Transverse colon (tissue), 4 donors: ENCODE measurements at regions of chr15 and their contacts with region 1.

Region 1: DNA sequence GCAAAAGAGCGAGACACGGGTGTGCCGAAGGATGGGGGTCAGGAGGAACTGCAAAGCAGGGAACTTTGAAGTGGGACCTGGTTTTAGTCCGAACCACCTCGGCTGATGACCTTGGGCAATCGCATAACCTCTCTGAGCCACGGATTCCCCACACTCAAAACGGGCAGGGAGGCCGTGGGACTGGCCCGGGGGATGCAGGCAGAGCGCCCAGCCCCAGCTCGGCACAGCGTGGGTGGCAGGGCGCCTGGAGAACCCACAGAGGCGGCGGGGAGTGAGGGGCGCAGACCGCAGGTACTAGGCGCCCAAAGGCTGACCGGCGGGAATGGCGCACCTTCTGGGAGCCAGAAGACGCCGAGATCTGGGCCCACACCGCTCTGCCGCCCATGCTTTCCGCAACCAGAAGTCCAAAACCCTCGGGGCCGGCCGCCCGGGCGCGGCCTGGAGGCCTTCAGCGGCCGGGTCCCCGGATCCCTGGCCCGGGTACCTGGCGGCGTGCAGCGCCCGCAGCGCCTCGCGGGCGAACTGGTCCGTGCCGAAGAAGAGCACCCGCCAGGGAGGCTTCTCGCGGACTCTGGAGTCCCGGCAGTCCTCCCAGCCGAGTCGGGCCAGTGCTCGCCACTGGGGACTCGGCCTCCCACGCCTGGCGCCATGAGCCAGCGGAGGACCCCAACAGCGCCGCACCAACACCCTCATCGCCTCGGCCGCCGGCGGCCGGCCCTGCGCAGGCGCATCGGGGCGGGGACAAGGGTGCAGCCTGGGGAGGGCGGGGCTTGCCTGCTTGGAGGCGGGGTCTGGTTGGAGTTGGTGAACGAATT is at the start of gene MTFMT:
- DNase-seq: peak; percentile 95
- H3K4me3 ChIP-seq: peak within 1 kb of the TSS; percentile 62 to 98 (median 91)
- H3K27ac ChIP-seq: peak within 1 kb of the TSS; percentile 85 to 91 (median 89)
- H3K4me1 ChIP-seq: peaks cover 11 to 26% (median 17%) of the 10 kb centered on the region in 4 donors
- H3K27me3 ChIP-seq: no peaks in the 10 kb centered on the region
- CTCF ChIP-seq: no peak
- EP300 ChIP-seq: no peak
- POLR2A ChIP-seq: peak; percentile 92
- total RNA-seq, gene MTFMT: 9.8 to 40.5 (median 31.0) TPM

Region 2: DNA sequence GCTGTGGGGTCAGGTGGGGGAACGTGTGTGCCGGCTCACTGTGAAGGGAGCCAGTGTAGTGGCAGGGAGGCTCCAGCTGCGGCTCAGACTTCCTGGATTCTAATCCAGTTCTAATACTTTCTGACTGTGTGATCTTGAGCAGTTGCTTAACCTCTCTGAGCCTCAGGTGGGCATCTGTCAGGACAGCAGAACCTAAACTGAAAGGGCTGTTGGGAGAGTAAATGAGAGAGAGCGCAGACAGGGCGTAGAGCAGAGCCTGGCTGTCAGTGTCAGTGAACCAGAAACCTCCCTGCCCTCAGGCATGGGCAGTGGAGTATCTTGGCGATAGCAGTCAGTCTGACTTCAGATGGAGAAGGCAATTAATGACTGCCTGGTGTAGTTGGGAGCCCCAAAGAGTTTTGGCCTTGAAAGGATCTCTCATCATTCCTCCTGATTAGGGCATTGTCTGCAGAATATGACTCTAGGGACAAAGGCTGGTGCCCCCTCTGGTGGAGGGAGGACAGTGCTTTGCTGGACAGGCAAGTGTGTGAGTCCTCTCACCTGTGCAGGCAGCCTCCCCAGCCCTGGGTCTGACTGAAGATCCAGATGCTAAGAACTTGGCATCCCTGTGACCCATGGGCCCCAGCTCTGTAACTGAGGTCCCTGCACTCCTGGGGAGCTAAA is 57.0 kb after region 1 on chr15:
- in situ Hi-C with region 1: loop called in 3 of 4 experiments (anchors 10 kb)
- intact Hi-C with region 1: no loop called
- DNase-seq: peak; percentile 57
- H3K4me3 ChIP-seq: no peak overlapping the region
- H3K27ac ChIP-seq: peak overlapping the region; percentile 84 to 91 (median 88)
- H3K4me1 ChIP-seq: peaks cover 35 to 61% (median 50%) of the 10 kb centered on the region in 4 donors
- H3K27me3 ChIP-seq: no peaks in the 10 kb centered on the region
- CTCF ChIP-seq: peak; percentile 22 to 43 (median 33)
- EP300 ChIP-seq: no peak
- POLR2A ChIP-seq: no peak

Region 3: DNA sequence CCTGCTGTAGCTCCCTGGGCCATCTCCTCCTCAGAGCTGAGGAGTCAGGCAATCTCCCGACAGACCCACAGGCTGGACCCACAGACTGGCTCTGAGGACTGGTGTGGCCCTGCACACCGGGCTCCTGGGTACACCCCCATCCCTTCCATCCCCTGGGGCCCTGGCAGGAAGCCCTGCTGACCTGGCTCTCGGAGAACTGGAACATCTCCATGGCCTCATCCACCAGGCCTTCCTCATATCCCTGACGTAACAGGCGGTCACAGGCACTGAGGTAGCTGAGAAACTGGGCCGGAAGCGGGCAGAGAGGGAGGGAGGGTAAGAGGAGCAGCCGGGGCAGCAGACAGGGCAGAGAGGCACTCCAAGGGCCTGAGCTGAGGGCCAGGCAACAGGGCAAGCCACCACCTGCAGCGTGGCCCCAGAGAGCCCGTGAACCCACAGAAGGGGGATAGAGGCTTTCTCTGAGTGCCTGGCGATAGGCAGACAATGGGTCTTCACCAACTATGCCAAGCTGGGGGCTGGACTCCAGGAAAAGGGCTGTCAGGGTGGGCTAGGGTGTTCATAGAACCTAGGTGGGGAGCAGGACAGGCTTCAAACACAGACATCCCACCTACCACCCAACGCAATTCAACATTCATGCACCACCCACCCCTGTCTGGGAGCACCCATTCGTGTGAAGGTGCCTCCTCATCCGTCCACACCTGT is 65.3 kb after region 1 on chr15:
- in situ Hi-C with region 1: loop called in 3 of 4 experiments (anchors 10 kb)
- intact Hi-C with region 1: no loop called
- DNase-seq: peak; percentile 33
- H3K4me3 ChIP-seq: no peak overlapping the region
- H3K27ac ChIP-seq: peak overlapping the region; percentile 10 to 78 (median 62)
- H3K4me1 ChIP-seq: peaks cover 2 to 16% (median 14%) of the 10 kb centered on the region in 4 donors
- H3K27me3 ChIP-seq: no peaks in the 10 kb centered on the region
- CTCF ChIP-seq: no peak
- EP300 ChIP-seq: peak; percentile 37
- POLR2A ChIP-seq: no peak

Region 4: DNA sequence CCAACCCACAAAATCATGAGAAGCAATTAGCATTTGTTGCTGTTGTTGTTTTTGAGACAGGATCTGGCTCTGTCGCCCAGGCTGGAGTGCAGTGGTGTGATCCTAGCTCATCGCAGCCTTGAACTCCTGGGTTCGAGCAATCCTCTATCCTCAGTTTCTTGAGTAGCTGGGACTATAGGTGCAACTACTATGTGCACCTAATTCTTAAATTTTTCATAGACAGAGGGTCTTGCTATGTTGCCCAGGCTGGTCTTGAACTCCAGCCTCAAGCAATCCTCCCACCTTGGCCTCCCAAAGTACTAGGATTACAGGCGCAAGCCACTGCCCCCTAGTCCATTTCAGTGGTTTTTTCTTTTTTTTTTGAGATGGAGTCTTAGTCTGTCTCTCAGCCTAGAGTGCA is 239.3 kb after region 1 on chr15:
- in situ Hi-C with region 1: no loop called
- intact Hi-C with region 1: no loop called
- DNase-seq: no peak
- H3K4me3 ChIP-seq: no peak overlapping the region
- H3K27ac ChIP-seq: no peak overlapping the region
- H3K4me1 ChIP-seq: peaks cover 3 to 26% (median 12%) of the 10 kb centered on the region in 4 donors
- H3K27me3 ChIP-seq: no peaks in the 10 kb centered on the region
- CTCF ChIP-seq: no peak
- EP300 ChIP-seq: no peak
- POLR2A ChIP-seq: no peak

Region 5: DNA sequence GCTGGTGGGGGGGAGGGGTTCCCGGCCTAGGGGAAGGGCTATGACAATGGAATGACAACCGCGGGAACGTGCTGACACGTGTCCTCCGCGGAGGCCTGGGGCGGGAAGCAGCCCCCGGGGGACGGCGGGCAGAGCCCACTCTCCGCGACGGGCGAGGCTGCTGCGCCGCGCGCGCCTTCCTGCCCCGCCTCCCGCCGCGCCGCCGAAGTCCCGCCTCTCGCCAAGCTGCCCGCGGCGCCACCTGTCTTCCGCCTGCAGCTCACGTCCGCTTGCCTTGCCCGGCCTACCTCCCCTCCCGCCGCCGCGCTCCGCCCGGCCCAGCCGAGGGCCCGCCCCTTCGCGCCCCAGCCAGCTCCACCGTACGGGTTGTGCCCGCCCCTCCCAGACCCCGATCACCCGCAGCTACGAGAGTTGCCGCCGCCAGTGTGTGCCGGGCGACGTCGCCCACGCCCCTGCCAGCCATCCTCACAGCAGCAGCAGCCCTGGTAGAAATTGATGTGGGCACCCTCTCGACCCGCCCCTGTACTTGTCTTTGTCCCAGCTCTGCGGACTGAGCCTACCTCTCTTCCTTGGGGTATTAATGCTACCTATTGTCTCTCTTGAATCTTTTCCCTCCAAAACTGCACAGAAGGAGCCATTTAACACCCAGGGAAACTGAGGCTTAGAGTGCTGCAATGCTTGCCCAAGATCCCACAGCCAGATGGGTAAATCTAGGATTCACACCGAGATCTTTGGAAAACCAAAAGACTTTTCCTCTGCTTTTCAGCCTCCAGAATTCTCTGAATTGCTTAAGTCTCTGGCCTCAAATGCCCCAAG is 257.8 kb after region 1 on chr15 and contains the start of gene PARP16:
- in situ Hi-C with region 1: loop called in 3 of 4 experiments (anchors 25 kb)
- intact Hi-C with region 1: no loop called
- DNase-seq: peak; percentile 95
- H3K4me3 ChIP-seq: peak within 1 kb of the TSS; percentile 54 to 75 (median 71)
- H3K27ac ChIP-seq: peak within 1 kb of the TSS; percentile 88 to 95 (median 92)
- H3K4me1 ChIP-seq: peaks cover 4 to 19% (median 16%) of the 10 kb centered on the region in 4 donors
- H3K27me3 ChIP-seq: no peaks in the 10 kb centered on the region
- CTCF ChIP-seq: peak in 4 of 5 experiments; percentile 36 to 57 (median 38)
- EP300 ChIP-seq: no peak
- POLR2A ChIP-seq: peak; percentile 66
- total RNA-seq, gene PARP16: 4.6 to 11.5 (median 7.5) TPM